ENCODE measurements at regions of chr2 and their contacts with region 1.

Region 1: DNA sequence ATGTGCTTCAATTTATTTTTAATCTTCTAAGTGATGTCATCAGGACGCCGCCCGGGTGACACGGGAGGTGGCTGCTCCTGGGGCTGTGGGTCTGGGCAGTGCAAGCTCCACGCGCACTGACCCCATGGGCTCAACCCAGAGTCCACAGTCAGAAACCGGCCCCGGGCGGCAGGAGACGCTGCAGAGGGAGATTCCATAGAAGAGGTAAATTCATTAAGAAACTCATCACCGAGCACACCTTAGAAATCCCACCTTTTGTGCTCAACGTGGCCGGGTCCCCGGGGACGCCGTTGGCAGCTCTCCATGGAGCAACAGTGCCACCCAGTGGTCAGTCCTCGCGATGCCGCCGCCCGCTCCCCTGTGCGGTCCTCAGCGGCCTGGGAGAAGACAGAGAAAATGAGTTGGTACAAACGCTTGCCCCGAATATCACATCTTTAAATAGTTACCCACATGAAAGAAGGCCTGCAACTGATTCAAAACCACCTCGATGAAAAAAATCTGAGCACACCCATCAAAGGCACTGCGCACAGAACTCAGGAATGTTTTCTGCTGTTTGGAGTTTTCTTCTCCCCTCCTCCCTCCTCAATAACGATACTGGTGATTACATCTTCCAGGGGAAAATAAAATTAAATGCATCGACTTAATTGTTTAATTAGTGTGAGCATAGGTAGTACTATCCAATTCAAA is 92.6 kb downstream of the CMPK2 start:
- DNase-seq: peak; percentile 72
- ATAC-seq: peak; percentile 90

Region 2: DNA sequence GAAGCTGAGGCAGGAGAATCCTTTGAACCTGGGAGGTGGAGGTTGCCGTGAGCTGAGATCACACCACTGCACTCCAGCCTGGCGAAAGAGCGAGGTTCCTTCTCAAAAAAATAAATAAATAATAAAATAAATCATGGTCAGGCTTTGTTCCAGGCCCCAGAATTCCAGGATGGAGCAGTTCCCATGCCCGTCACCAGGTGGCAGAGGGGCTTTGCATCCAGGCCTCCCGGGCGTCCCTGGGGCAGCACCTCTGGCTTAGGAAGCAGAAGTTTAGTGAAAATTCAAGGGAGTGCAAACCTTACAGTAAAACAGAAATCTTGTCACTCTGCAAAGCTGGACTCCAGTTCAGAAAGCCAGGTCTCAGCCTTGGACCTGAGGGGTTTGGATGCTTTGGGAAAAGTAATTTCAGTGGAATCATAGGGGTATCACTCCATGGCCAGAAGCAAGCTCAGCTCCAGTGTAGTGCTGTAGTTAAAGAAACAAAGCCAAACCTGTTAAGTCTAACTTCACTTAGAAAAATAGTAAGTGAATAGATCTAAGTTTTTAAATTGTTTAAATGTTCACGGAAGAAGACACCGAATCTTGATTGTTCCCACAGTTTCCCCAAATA is 420.1 kb before region 1 on chr2:
- intact Hi-C with region 1: loop called (anchors 5 kb)
- DNase-seq: peak; percentile 65
- ATAC-seq: peak; percentile 51

Measured in left ventricle myocardium superior (tissue), 1 donor.